ENCODE measurements at regions of chr2 and their contacts with region 1.

Region 1: DNA sequence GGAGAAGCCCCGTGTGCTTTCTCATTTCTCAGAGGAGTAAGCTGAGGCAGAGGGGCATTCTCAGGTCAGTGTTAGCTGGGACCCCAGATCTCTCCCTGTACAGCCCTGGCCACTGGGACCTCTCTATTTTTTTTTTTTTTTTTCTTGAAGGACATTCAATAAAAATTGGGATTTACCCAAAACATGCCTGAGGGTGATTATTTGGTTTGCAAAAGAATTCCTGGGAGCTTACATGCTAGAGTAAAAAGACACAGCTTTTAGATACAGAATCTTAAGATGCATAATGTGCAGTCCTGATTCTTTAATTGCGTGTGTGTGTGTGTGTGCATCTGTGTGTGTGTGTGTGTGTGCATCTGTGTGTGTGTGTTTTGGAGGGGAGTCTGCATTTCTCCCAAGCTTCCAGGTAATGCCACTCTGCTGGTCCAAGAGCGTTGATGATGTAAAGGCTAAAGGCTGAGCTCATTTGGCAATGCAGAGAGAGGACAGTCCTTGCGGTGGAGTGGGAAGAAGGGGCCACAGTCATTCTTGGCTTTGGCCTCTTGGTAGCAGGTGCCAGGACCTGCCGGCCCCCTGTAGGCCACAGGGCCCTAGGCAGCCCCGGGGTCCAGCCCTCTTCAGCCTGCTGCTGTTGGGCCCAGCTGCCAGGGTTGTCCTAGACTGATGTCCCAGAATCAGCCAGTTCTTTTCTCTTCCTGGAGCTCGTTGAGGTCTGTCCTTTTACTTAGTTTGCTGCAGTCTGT is 74.1 kb upstream of the MCFD2 start:
- DNase-seq: no peak
- H3K4me3 ChIP-seq: no peak overlapping the region
- CTCF ChIP-seq: no peak
- POLR2A ChIP-seq: no peak

Region 2: DNA sequence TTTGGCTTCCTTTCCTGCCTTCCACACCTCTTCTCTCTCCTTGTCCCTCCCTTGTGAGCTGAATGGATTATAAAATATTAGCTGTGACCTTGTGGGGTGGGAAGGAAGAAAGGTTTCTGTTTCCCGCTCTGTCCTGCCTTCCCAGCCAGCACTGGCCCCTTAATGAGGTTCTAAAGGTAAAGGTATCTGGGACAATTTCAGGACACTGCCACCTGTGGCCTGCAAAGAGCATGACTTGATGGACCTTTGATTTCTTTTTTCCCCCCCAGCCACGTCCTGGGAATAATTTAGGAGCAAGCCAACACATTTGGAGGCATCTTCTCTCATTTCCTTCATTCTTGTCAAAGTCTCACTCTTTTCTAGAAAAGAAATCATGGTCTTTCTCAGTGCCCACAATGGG is 939.2 kb before region 1 on chr2:
- intact Hi-C with region 1: no loop called
- DNase-seq: no peak
- H3K4me3 ChIP-seq: no peak overlapping the region
- CTCF ChIP-seq: no peak
- POLR2A ChIP-seq: no peak

Region 3: DNA sequence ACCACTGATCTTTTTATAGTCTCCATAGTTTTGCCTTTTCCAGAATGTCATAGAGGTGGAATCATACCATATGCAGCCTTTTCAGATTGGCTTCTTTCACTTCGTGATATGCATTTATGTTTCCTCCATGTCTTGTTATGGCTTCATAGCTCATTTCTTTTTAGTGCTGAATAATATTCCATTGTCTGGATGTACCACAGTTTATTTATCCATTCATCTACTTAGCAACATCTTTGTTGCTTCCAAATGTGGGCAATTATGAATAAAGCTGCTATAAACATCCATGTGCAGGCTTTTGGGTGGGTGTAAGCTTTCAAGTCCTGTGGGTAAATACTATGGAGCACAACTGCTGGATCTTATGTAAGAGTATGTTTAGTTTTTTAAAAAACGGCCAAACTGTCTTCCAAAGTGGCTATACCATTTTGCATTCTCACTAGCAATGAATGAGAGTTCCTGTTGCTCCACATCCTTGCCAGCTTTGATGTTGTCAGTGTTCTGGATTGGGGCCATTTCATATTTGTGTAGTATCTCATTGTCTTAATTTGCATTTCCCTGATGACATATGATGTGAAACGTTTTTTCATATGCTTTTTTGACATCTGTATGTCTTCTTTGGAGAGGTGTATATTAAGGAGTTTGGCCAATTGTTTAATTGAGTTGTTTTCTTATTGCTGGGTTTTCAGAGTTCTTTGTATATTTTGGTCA is 144.9 kb after region 1 on chr2:
- intact Hi-C with region 1: no loop called
- DNase-seq: no peak
- H3K4me3 ChIP-seq: no peak overlapping the region
- CTCF ChIP-seq: no peak
- POLR2A ChIP-seq: no peak

Region 4: DNA sequence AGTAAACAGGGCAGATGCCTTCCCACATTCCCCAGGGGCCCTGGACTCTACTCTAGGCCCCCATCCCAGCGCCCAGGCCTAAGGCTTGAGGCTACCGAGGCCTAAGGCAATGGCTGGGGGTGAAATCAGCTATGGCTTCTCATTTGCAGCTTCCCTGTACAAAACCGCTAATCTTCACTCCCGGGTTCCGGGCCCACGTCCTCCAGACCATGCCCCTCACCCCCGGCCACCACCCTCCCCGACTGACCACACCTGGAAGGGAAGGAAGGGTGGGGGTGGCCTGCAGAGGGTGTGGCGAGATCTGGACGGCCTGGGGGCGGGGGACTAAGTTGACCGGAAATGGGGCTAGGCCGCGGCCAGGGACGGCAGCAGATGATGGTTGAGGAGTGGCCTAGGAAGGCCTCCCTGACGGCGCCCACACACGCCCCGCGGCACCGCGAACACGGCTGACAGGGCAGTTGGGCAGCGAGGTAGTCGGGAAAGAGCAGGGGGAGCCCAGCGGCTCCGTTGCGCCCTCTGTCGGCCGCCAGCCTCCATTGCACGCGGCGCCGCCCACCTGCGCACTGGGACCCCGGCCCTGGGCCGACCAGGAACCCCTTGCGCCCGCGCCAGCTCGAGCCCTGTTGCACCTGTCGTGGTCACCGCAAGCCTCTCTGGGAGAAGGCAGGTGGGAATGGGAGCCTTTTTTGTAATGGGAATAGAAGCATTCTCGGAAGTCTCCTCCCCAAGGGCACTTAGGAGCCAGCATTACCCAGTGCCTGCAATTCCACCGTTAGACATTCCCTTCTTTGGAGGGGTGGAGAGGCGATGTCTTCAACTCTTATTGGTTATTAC is 282.6 kb after region 1 on chr2:
- intact Hi-C with region 1: loop called (anchors 10 kb)
- DNase-seq: peak; percentile 24 to 92
- H3K4me3 ChIP-seq: no peak overlapping the region
- CTCF ChIP-seq: peak in 2 of 3 donors; percentile 30 to 70
- POLR2A ChIP-seq: no peak

Measured in lower leg skin (tissue), 4 donors.